MCF 10A (cell line): ENCODE measurements at regions of chr2 and their contacts with region 1.

Region 1: DNA sequence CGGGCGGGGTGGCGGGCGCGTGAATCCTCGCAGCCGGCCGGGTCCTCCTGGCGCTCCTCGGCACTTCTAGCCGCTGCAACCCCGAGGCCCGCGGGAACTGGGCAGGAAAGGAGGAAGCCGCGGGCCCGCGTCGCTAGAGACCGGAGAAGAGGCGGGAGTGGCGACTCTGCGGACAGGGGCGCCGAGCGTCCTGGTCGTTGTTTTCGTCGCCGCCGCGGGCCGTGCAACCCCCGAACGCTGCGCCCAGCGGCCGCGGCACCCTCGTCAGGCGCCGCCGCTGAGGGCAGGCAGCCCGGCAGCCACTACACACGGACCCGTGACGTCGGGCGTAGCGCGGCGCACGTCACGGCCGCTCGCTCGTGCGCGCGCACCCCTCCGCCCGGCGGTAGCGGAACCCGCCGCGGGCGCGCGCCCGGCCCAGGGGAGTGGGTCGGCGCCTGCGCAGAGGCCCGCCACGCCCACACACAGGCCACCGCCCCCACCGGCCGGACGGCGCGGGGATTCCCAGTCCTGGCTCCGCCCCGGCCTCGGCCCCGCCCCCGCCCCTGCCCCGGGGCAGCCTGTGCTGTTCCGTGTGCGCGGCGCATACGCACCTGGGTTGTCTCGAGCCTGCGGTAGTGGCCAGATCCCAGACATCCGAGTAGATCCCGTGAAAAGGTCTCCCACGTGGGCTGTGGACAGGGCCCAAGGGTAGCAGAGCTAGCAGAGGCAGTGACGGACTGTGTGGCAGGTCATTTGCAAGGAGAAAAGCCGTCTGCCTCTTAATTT is at the start of gene MAP3K2:
- DNase-seq: peak; percentile 91
- H3K4me3 Mint-ChIP-seq: peak within 1 kb of the TSS; percentile 90
- H3K27ac Mint-ChIP-seq: peak within 1 kb of the TSS; percentile 93
- H3K4me1 Mint-ChIP-seq: peaks cover 33% of the 10 kb centered on the region
- H3K27me3 Mint-ChIP-seq: no peaks in the 10 kb centered on the region
- CTCF ChIP-seq: no peak
- total RNA-seq, gene MAP3K2: 62.9 and 65.6 TPM in 2 replicates

Region 2: GRCh38 chr2:127377262-127377661 is 10.6 kb before region 1 on chr2:
- CTCF ChIA-PET with region 1: interaction called, 4 read pairs
- POLR2A ChIA-PET with region 1: interaction called, 10 read pairs
- intact Hi-C with region 1: no loop called
- DNase-seq: no peak
- H3K4me3 Mint-ChIP-seq: no peak overlapping the region
- H3K27ac Mint-ChIP-seq: peak overlapping the region; percentile 69
- H3K4me1 Mint-ChIP-seq: peaks cover 10% of the 10 kb centered on the region
- H3K27me3 Mint-ChIP-seq: no peaks in the 10 kb centered on the region
- CTCF ChIP-seq: no peak

Region 3: GRCh38 chr2:127398239-127398590 is 10.4 kb after region 1 on chr2:
- CTCF ChIA-PET with region 1: interaction called, 12 read pairs
- POLR2A ChIA-PET with region 1: interaction called, 51 read pairs
- intact Hi-C with region 1: no loop called
- DNase-seq: peak; percentile 96
- H3K4me3 Mint-ChIP-seq: no peak overlapping the region
- H3K27ac Mint-ChIP-seq: peak overlapping the region; percentile 19
- H3K4me1 Mint-ChIP-seq: peaks cover 34% of the 10 kb centered on the region
- H3K27me3 Mint-ChIP-seq: no peaks in the 10 kb centered on the region
- CTCF ChIP-seq: no peak

Region 4: DNA sequence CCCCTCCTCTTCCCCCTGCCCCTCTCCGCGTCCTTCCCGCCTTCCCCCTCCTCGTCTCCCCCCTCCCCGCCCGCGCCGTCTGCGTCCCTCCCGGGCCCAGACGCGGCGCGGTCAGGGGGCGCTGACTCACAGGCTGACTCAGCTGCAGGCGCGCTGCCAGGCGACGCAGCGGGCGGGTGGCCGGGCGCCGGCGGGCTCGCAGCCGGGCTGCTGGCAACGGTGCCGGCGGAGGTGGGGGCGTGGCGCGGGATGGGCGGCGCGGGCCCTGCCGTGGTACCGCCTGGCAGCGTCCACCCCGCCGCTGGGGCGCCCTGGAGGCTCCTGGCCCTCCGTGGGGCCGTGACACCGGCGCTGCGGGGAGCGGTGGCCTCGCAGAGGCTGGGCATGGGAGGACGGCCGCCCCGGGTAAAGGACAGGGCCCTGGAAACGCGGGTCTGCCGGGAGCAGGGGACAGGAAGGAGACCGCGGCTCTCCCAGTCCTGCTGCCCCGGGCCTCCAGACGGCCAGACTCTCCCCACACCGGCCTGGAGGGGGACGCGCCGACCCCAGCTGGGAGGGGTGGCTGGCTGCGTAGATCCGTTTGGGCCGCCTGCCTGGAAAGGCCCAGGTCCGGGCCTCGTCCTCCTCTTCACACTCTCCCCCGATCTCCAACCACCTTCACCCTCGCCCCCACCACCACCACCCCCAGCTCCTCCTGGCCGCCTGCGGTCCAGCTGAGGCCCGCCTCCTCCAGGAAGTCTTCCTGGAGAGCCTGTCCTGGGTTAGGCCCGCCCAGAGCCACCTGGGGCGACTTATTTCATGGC is 20.4 kb after region 1 on chr2:
- CTCF ChIA-PET with region 1: interaction called, 3 read pairs
- POLR2A ChIA-PET with region 1: interaction called, 40 read pairs
- intact Hi-C with region 1: loop called (anchors 2 kb)
- DNase-seq: peak; percentile 83
- H3K4me3 Mint-ChIP-seq: peak overlapping the region; percentile 40
- H3K27ac Mint-ChIP-seq: no peak overlapping the region
- H3K4me1 Mint-ChIP-seq: peaks cover 31% of the 10 kb centered on the region
- H3K27me3 Mint-ChIP-seq: no peaks in the 10 kb centered on the region
- CTCF ChIP-seq: peak; percentile 10

Region 5: DNA sequence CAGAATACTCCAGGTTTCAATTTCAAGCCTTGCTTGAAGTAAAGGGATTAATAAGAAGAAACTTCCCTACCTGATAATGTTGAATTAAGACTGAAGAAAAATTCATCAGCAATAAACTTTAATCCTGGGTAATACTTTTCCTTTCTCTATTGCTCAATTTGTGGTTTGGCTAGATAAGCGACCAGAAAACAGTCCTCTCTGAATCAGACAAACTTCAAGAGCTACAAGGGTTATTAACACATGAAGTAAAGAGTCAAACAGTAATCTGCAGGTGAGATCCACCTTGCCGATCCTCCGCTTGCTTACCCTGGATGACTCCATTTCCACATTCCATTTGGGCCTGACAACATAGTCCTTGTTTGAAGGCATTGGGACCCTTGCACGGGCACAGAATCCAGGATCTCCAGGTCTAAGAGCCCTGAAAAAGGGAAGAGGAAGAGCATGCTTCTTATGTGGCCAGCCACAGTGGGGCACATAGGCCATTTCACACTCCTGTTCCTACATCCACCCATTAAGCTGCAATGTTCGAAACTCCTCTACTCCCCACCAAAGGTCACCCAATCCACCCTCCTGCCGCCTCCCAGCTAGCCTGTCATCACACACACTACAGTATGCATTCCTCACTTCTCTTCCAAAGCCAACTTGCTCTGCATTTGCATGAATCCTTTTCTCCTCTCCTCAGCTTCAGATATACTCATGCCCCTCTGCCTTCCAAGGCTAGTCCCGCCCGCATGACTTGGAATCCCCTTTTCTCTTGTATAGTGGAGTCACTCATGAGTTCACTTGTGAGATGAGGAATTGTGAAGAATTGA is 98.6 kb after region 1 on chr2:
- CTCF ChIA-PET with region 1: no interaction called
- POLR2A ChIA-PET with region 1: no interaction called
- intact Hi-C with region 1: no loop called
- DNase-seq: no peak
- H3K4me3 Mint-ChIP-seq: no peak overlapping the region
- H3K27ac Mint-ChIP-seq: peak overlapping the region; percentile 69
- H3K4me1 Mint-ChIP-seq: peaks cover 7% of the 10 kb centered on the region
- H3K27me3 Mint-ChIP-seq: no peaks in the 10 kb centered on the region
- CTCF ChIP-seq: no peak